ENCODE measurements at regions of chr17 and their contacts with region 1.

Region 1: DNA sequence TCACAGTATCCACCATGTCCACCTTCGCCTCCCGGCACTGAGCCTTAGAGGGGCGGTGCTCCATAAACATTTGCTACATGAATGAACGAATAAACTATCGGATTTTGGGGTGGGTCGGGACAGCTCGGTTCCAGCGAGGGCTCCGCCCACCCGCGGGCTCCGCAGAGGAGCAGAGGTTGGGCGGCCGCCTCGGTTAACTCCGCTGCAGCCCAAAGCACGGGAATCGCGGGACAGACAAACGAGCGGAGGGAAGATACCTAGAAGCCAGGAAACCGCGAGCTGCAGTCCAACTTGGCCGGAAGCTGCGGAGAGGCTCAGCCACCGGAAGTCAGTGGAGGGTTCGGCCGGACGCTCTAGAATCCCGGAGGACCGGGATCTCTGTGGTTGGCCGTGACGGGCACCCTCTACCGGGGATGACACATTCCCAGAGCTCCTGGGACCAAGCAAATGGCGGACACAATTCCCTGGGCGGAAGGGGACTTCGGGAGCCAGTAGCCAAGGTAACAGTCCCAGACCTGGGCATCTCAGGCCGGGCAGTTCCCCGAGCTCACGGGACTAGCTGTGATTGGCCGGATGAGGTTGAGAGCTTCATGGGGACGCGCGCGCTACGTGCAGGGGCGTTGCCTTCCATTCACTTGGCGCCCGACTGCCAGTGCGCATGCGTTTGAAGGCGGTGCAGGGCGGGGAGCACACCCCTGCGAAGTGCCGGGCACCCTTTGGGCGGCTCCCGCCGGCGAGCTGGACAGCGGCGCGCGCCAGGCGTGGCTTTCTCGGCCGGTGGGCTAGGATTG is 501 bp upstream of the MAPK7 start:
- DNase-seq: peak; percentile 97
- ATAC-seq: peak; percentile 96
- H3K4me3 Mint-ChIP-seq: peak overlapping the region; percentile 89
- H3K27ac Mint-ChIP-seq: peak overlapping the region; percentile 98
- H3K4me1 Mint-ChIP-seq: peaks cover 16% of the 10 kb centered on the region
- H3K27me3 Mint-ChIP-seq: no peaks in the 10 kb centered on the region

Region 2: DNA sequence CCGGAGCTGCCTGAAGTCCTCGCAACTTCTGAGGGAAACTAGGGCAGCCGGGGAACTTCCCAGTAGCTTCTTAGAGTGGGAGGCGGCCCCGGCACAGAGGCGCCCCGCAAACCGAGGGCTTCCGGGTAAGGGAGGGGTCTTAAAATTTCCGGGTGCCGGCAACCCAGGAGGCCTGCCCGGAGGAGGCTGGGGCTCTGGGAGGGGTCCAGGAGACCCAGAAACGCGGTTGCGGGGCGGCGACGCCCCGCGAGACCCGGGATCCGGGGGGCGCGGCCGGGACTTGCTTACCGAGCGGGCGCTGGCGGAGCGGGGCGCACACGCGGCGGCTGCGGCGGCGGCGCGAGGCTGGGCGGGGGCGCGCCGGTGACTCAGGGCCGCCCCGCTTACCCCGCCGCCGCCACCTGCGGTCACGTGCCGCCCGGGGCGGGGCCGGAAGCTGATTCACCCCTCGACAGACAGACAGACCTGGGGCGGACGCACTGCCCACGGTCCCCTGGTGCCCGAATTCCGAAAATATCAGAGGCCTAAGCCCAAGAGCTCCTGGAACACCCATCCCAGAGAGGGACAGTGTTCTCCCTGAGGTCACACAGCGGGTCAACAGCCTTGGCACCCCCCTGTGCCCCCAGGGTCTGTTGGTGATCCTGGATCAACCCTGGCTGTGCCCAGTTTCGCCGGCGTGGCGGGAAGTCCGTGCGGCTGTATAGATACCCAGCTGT is 373.2 kb before region 1 on chr17 and contains the start of gene FAM83G:
- CTCF ChIA-PET with region 1: no interaction called
- POLR2A ChIA-PET with region 1: no interaction called
- intact Hi-C with region 1: loop called in 1 of 2 experiments (anchors 1 kb)
- DNase-seq: peak; percentile 94
- ATAC-seq: peak; percentile 87
- H3K4me3 Mint-ChIP-seq: peak within 1 kb of the TSS; percentile 88
- H3K27ac Mint-ChIP-seq: peak within 1 kb of the TSS; percentile 89
- H3K4me1 Mint-ChIP-seq: peaks cover 26% of the 10 kb centered on the region
- H3K27me3 Mint-ChIP-seq: no peaks in the 10 kb centered on the region
- total RNA-seq, gene FAM83G: 11.1 to 14.3 TPM

Region 3: GRCh38 chr17:19387921-19388521 is 10.2 kb after region 1 on chr17:
- CTCF ChIA-PET with region 1: interaction called, 11 read pairs
- POLR2A ChIA-PET with region 1: no interaction called
- intact Hi-C with region 1: no loop called
- DNase-seq: no peak
- ATAC-seq: no peak
- H3K4me3 Mint-ChIP-seq: no peak overlapping the region
- H3K27ac Mint-ChIP-seq: no peak overlapping the region
- H3K4me1 Mint-ChIP-seq: peaks cover 4% of the 10 kb centered on the region
- H3K27me3 Mint-ChIP-seq: no peaks in the 10 kb centered on the region

Region 4: GRCh38 chr17:19507775-19508576 is 130.2 kb after region 1 on chr17:
- CTCF ChIA-PET with region 1: no interaction called
- POLR2A ChIA-PET with region 1: no interaction called
- intact Hi-C with region 1: loop called (anchors 1 to 5 kb)
- DNase-seq: peak; percentile 87
- ATAC-seq: peak; percentile 85
- H3K4me3 Mint-ChIP-seq: peak overlapping the region; percentile 82
- H3K27ac Mint-ChIP-seq: peak overlapping the region; percentile 89
- H3K4me1 Mint-ChIP-seq: peaks cover 7% of the 10 kb centered on the region
- H3K27me3 Mint-ChIP-seq: peaks cover 2% of the 10 kb centered on the region

Region 5: GRCh38 chr17:19766422-19767270 is 388.8 kb after region 1 on chr17:
- CTCF ChIA-PET with region 1: interaction called, 4 read pairs
- POLR2A ChIA-PET with region 1: no interaction called
- intact Hi-C with region 1: loop called in 1 of 2 experiments (anchors 5 kb)
- DNase-seq: peak; percentile 89
- ATAC-seq: peak; percentile 80
- H3K4me3 Mint-ChIP-seq: no peak overlapping the region
- H3K27ac Mint-ChIP-seq: peak overlapping the region; percentile 72
- H3K4me1 Mint-ChIP-seq: peaks cover 46% of the 10 kb centered on the region
- H3K27me3 Mint-ChIP-seq: no peaks in the 10 kb centered on the region

Region 6: GRCh38 chr17:19787733-19788357 is 410.0 kb after region 1 on chr17:
- CTCF ChIA-PET with region 1: no interaction called
- POLR2A ChIA-PET with region 1: no interaction called
- intact Hi-C with region 1: no loop called
- DNase-seq: peak; percentile 58
- ATAC-seq: peak; percentile 84
- H3K4me3 Mint-ChIP-seq: no peak overlapping the region
- H3K27ac Mint-ChIP-seq: no peak overlapping the region
- H3K4me1 Mint-ChIP-seq: peaks cover 7% of the 10 kb centered on the region
- H3K27me3 Mint-ChIP-seq: no peaks in the 10 kb centered on the region

Region 7: GRCh38 chr17:20009302-20010098 is 631.7 kb after region 1 on chr17 and contains the start of gene SPECC1:
- CTCF ChIA-PET with region 1: no interaction called
- POLR2A ChIA-PET with region 1: no interaction called
- intact Hi-C with region 1: loop called in 1 of 2 experiments (anchors 1 kb)
- DNase-seq: peak; percentile 92
- ATAC-seq: peak; percentile 99
- H3K4me3 Mint-ChIP-seq: peak within 1 kb of the TSS; percentile 77
- H3K27ac Mint-ChIP-seq: peak within 1 kb of the TSS; percentile 17
- H3K4me1 Mint-ChIP-seq: peaks cover 11% of the 10 kb centered on the region
- H3K27me3 Mint-ChIP-seq: peaks cover 37% of the 10 kb centered on the region
- total RNA-seq, gene SPECC1: 6.1 to 10.4 TPM